ENCODE measurements at regions of chr4 and their contacts with region 1.

Region 1: DNA sequence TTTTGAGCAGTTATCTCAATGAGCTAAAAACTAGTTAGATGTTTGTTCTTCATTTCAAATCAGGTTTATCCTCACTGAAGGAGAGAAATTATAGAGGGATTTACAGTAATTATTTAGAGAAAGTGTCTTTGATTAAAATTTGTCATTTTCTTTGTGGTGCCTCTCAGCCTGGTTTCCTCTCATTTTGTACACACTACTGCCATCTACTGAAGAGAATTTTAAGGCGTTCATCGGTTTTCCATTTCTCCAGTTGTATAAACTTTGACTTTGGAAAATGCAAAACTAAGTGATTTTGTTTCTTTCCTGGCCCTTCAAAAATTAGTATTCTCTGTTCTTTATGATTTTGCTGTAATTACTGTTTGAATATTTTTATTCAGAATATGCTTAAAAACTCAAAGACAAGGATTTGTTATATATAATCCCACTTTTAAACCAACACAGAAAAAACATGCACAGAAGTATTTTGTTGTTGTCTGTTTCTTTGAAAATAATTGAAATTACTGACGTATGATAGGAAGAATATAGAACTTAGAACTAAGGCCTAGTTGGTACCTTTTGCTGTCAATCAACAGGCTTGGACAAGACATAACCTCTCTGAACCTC is 34.4 kb upstream of the ANXA3 start:
- DNase-seq: no peak
- H3K4me3 ChIP-seq: no peak overlapping the region
- H3K27ac ChIP-seq: no peak overlapping the region
- H3K27me3 ChIP-seq: no peaks in the 10 kb centered on the region
- CTCF ChIP-seq: peak; percentile 35 to 84 (median 66)

Region 2: DNA sequence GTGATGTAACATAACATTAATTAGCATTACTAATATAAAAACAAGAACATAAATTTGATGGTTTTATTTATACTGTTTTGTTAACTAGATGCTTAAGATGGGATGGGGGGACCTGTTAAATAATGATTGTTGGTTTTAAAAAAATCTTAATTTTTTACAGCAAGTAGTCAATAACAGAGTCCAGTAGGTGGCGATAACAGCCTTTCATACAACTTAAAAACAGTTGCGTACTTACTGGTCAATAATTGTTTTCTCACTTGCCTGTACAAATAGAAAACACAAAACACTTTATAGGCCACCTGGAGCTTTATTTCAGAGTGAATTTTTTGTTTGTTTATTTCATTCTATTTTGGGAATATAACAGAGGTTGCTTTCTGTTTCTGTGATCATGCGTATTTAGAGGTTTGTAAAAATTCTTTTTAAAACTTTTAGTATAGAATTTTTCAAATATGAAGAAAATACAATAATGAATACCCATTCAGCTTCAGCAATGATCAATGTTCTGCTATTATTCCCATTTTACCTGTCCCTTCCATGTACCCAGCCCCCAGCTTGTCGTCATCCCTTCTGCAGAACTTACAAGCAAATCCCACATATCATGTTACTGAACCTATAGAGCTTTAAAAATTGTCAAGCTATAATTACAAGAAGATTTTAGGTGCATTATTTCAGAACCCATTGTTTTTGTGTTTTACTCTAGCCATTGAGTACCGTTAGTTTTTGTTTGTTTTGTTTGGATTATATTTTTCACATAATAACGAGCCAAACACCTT is 557.4 kb before region 1 on chr4:
- intact Hi-C with region 1: loop called (anchors 5 to 10 kb)
- DNase-seq: no peak
- H3K4me3 ChIP-seq: peak overlapping the region in 53 of 59 donors; percentile 7 to 59 (median 38)
- H3K27ac ChIP-seq: no peak overlapping the region
- H3K27me3 ChIP-seq: no peaks in the 10 kb centered on the region
- CTCF ChIP-seq: peak; percentile 52 to 85 (median 70)

Region 3: DNA sequence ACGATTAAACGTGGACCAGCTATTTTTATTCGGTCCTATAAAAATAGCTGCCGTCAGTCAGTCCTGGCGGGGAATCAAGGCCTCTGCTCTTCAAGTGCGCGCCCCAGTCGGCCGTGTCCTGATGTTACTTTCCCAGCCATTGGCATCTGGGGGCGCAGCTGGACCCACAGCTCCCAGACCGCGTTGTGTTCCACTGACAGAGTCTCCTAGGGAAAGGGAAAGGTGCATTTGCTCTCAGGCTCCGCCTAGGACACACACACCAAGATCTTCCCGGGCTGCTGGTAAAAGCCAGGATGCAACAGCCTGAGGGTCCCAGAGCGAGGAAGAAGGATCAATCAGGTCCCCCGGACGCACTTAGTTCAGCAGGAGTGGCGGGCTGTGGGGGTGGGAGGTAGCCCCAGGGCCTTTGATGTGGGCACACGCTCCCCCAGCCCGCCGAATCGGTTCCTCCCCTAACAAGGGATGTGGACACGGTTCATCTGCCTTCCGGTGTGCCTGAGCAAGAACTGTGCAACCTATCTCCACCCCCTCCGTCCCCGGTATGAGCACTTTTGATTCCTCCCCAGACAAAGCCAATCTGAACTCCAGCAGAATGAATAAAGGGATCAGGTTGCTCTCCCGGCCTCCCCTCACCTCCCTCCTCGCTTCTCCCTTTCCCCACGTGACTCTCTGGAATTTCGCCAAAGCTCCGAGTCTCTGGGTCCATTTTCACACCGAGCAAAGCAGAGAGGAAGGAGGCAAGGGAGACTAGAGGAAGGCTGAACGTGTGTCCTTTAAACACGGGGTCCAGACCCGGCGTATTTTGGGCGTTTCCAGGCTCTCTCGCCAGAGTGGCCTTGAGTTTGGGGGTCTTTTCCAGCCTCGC is 460.7 kb before region 1 on chr4:
- intact Hi-C with region 1: loop called in 1 of 2 experiments (anchors 5 kb)
- DNase-seq: peak in 8 of 10 donors; percentile 28 to 72 (median 52)
- H3K4me3 ChIP-seq: peak overlapping the region; percentile 51 to 88 (median 71)
- H3K27ac ChIP-seq: peak overlapping the region in 50 of 59 donors; percentile 20 to 82 (median 67)
- H3K27me3 ChIP-seq: peaks cover 0 to 3% (median 0%) of the 10 kb centered on the region in 45 donors
- CTCF ChIP-seq: peak in 6 of 56 donors; percentile 13 to 21 (median 16)